ENCODE measurements at regions of chr7 and their contacts with region 1.

Region 1: DNA sequence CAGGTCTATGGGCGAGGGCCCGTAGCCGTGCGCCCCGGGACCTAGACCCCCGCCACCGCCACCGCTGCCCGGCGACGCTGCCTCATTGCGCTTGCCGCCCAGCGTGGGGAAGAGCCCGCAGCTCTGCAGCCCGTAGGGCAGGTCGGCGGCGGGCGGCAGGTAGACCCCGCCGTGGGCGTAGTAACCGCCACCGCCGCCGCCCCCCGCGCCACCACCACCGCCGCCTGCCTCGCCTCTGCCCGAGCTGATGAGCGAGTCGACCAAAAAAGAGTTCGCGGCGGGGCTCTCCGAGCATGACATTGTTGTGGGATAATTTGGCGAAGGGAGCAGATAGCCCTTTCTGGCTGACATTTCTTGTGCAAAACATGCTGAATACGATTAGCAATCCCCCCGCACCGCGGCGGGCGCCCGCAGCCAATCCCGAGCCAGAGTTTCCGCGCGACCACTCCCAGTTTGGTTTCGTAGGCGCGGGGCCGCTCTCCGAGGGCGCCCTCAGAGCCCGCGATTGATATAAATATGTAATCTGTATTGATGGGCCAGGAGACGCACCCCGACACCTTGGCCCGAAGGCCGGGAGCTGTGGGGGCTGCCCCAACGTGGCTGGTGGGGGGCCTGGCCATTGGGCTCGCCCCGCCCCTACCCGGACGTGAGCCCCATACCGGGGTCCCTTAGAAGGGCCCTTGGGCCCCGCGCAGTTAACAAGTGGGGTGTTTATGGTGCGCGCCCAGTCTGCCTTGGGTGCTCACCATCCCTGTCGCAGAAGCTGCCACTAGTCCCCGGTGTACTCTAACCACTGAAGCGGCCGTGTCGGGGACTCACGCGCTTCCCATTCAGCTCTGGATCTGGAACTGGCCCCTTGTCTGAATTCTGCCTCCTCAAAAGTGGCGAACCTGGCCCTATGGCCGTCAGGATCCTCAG is at the start of gene HOXA10:
- DNase-seq: no peak
- H3K4me3 ChIP-seq: peak within 1 kb of the TSS; percentile 25
- H3K27ac ChIP-seq: no peak within 1 kb of the TSS
- H3K27me3 ChIP-seq: peaks cover 88% of the 10 kb centered on the region
- CTCF ChIP-seq: no peak
- polyA plus RNA-seq, gene HOXA10: 0.36 and 0.47 TPM in 2 replicates

Region 2: GRCh38 chr7:27888736-27889135 is 714.5 kb after region 1 on chr7:
- CTCF ChIA-PET with region 1: interaction called, 13 read pairs
- POLR2A ChIA-PET with region 1: no interaction called
- DNase-seq: no peak
- H3K4me3 ChIP-seq: no peak overlapping the region
- H3K27ac ChIP-seq: no peak overlapping the region
- H3K27me3 ChIP-seq: no peaks in the 10 kb centered on the region
- CTCF ChIP-seq: no peak